Activated CD4-positive, alpha-beta memory T cell treated with anti-CD3 and anti-CD28 coated beads for 36 hours (primary cell): ENCODE measurements at regions of chr5 and their contacts with region 1.

Region 1: DNA sequence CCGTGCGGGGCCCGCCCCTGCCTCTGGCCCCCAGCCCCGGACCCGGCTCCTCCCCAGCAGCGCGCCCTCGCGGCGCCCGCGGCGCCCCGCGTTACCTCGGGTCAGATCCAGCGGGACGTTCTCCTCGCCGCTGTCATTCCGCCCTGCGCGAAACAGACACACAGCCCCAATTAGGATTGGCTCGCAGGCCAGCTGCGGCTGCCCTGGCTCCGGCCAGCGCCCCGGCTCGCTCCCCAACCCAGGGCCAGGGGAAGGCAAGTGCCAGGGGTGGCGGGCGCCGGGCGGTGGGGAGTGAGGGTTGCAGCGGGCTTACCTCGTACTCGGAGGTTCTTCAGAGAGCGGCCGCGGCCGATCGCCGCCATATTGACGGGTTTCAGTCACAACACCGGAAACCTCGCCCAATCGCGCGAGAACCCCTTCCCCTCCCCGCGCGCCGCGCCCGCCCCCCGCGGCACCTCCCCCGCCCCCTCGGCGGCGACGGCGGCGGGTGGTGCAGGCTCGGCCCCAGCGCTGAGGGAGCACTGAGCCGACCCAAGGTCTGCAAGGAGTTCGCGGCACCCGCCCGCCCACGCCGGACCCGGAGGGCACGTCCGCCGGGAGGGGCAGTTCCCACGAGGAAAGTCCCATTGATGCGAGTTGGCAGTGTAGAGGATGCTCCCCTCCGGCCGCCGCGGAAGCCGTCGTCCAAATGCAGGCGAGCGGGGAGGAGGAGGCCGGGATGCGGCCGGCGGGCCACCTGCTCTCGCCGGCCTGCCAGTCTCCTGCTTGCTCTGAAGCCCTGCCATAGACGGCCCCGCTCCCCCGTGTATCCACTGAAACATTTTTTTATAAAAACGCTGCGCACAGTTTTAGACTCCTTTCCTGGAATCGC is at the start of gene RICTOR:
- DNase-seq: peak; percentile 95
- H3K4me3 Mint-ChIP-seq: peak within 1 kb of the TSS; percentile 97
- H3K27ac Mint-ChIP-seq: peak within 1 kb of the TSS; percentile 96
- H3K4me1 Mint-ChIP-seq: peaks cover 28% of the 10 kb centered on the region
- H3K27me3 Mint-ChIP-seq: peaks cover 18% of the 10 kb centered on the region
- total RNA-seq, gene RICTOR: 27.7 to 27.8 TPM

Region 2: DNA sequence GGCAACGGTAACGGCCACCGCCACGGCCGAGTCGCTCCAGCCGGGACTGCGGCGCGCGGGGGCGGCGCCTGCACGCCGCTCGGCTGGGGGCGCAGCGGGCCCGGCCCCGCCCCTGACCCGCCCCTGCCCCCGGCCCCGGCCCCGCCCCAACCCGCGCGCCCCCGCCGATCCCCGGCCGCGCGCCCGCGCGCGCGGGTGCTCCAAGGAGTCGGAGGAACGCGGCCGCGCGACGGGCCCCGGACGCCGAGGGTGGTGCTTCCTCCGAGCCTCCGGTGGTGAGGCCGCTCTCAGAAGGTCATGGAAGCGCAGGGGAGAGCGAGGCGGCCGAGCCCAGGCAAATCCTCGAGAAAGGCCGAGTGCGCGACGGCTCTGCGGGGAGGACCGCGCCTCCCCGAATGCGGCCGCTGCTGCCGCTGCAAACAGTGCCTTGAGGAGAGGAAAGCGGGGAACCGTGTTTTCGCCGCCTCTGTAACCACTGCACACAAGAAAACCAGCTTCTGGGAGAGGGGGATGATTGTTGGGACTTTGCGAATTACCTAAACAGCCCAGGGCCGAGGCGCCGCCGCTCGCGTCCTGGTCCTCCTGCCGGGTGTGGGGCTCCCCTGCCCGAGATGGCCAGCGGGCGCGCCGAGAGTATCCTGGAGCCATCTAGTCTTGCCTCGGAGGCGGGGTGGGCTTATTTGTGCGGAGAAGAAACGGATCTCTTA is 517.5 kb before region 1 on chr5 and contains the start of gene LIFR:
- CTCF ChIA-PET with region 1: no interaction called
- POLR2A ChIA-PET with region 1: no interaction called
- intact Hi-C with region 1: loop called (anchors 10 kb)
- DNase-seq: peak; percentile 72
- H3K4me3 Mint-ChIP-seq: peak within 1 kb of the TSS; percentile 75
- H3K27ac Mint-ChIP-seq: no peak within 1 kb of the TSS
- H3K4me1 Mint-ChIP-seq: peaks cover 8% of the 10 kb centered on the region
- H3K27me3 Mint-ChIP-seq: peaks cover 47% of the 10 kb centered on the region
- total RNA-seq, gene LIFR: 0.05 to 0.14 TPM

Region 3: GRCh38 chr5:39005566-39006232 is 68.6 kb before region 1 on chr5:
- CTCF ChIA-PET with region 1: interaction called, 26 read pairs
- POLR2A ChIA-PET with region 1: no interaction called
- intact Hi-C with region 1: loop called (anchors 5 kb)
- DNase-seq: no peak
- H3K4me3 Mint-ChIP-seq: no peak overlapping the region
- H3K27ac Mint-ChIP-seq: no peak overlapping the region
- H3K4me1 Mint-ChIP-seq: peaks cover 47% of the 10 kb centered on the region
- H3K27me3 Mint-ChIP-seq: no peaks in the 10 kb centered on the region

Region 4: DNA sequence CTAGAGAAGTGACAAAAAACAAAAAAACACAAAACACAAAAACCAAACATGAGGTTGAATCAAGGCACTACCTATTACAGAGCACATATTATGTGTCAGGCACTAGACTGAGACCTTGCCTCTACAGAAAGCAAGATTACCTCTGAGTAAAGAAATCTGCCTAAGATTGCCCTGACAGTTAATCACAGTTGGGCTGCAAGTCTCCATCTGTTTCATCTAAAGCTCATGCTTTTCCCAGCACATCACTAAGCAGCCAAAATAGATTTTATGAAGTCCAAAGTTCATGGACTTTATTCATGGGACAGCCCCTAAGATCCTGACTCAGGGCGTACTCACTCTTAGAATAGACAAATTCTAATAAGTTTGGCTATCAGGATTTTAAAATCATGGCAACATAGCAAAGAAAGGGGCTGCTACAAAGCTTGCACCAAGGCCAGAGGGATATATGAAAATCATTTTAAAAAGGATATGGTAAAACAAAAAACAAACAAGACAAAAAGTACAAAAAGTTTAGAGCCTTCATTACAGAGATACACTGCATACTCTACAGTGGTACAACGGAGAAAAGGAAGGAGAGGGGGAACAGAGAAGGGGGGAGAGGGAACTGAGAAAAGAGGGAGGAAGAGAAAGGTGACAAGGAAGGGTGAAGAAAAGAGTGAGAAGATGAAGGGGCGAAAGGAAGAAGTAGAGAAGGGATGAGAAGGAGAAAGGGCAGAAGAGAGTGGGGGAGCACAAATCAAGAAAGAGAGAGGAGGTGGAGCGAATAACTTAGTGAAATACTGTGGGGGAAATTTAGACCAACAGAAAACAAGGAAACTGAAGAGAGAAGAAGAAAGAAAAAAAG is 58.3 kb before region 1 on chr5:
- CTCF ChIA-PET with region 1: no interaction called
- POLR2A ChIA-PET with region 1: no interaction called
- intact Hi-C with region 1: loop called (anchors 2 kb)
- DNase-seq: no peak
- H3K4me3 Mint-ChIP-seq: no peak overlapping the region
- H3K27ac Mint-ChIP-seq: no peak overlapping the region
- H3K4me1 Mint-ChIP-seq: peaks cover 28% of the 10 kb centered on the region
- H3K27me3 Mint-ChIP-seq: no peaks in the 10 kb centered on the region

Region 5: DNA sequence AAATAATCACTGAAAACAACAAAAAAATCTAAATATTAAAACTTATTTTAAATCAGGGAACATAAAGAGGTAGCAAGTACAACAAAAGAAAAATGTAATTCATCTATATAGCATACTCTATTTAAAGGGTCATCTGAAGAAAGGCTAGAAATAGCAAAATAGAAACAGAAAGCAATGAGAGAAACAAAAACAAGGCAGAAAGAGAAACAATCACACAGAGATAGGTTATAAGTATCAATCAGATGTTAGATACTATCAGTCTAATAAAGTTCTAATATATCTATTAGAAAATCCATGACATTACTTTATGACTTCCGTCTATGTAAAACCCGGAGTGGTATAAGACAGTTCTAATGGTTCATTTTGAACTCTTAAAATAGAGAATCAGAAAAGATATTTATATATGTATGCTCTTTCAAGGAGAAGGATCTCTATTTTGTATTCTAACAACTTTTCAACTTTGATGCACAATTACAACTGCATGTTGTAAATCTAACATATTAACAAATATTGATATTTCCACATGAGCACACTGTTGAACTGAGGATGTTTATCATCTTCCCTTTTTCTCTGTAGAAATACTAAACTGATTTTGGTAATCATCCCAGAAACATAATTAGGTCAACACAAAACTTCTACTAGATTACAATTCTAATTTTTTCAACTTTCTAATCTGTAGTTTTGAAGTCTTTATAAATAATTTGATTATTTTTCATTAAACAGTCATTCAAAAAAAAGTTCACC is 15.9 kb before region 1 on chr5:
- CTCF ChIA-PET with region 1: interaction called, 5 read pairs
- POLR2A ChIA-PET with region 1: interaction called, 5 read pairs
- intact Hi-C with region 1: loop called (anchors 1 kb)
- DNase-seq: no peak
- H3K4me3 Mint-ChIP-seq: no peak overlapping the region
- H3K27ac Mint-ChIP-seq: no peak overlapping the region
- H3K4me1 Mint-ChIP-seq: peaks cover 64% of the 10 kb centered on the region
- H3K27me3 Mint-ChIP-seq: no peaks in the 10 kb centered on the region